ENCODE measurements at regions of chr1 and their contacts with region 1.

Region 1: DNA sequence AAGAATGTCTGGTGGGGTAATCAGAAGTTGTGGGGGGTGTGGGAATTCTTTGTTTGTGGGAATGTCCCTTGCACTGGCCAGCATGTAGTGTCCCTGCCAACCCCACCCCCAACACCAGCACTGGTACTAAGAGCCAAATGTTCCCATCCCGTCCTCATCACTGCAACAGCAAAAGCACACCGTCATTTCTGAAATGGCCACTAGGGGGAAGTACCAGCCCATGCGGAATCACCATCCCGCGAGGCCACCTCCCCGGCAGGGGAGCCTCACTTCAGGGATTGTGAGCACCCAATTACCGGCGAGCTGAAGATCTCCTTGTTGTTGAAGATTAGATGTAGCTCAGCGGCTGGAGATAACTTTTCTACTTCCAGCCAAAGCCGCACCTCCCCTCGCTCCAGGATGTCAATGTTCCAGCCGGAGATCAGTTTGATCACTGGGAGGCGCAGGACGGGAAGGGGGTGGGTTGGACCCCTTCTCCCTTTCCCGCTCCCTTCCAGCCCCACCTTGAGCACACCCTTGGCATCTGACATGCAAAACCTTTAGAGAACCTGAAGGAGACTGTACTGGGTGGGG is 41.0 kb downstream of the MYOM3 start:
- DNase-seq: peak; percentile 79 to 86
- ATAC-seq: peak; percentile 95 to 97
- H3K4me3 ChIP-seq: no peak overlapping the region
- H3K27ac ChIP-seq: peak overlapping the region; percentile 43 to 54; a peak in 3 of 6 replicates
- H3K4me1 ChIP-seq: peaks cover 8% of the 10 kb centered on the region; the same call in 2 of the 3 replicates
- CTCF ChIP-seq: peak; percentile 73
- EP300 ChIP-seq: no peak
- POLR2A ChIP-seq: no peak
- RAD21 ChIP-seq: peak; percentile 83 to 84

Region 2: GRCh38 chr1:24060118-24060881 is 10.6 kb before region 1 on chr1:
- CTCF ChIA-PET with region 1: interaction called, 12 read pairs
- POLR2A ChIA-PET with region 1: no interaction called
- DNase-seq: no peak
- ATAC-seq: no peak
- H3K4me3 ChIP-seq: no peak overlapping the region
- H3K27ac ChIP-seq: no peak overlapping the region
- H3K4me1 ChIP-seq: no peaks in the 10 kb centered on the region
- CTCF ChIP-seq: no peak
- EP300 ChIP-seq: no peak
- POLR2A ChIP-seq: no peak
- RAD21 ChIP-seq: no peak

Region 3: GRCh38 chr1:24081190-24081589 is 10.3 kb after region 1 on chr1:
- CTCF ChIA-PET with region 1: interaction called, 12 read pairs
- POLR2A ChIA-PET with region 1: no interaction called
- DNase-seq: no peak
- ATAC-seq: no peak
- H3K4me3 ChIP-seq: no peak overlapping the region
- H3K27ac ChIP-seq: no peak overlapping the region
- H3K4me1 ChIP-seq: no peaks in the 10 kb centered on the region
- CTCF ChIP-seq: no peak
- EP300 ChIP-seq: no peak
- POLR2A ChIP-seq: no peak
- RAD21 ChIP-seq: no peak

Region 4: DNA sequence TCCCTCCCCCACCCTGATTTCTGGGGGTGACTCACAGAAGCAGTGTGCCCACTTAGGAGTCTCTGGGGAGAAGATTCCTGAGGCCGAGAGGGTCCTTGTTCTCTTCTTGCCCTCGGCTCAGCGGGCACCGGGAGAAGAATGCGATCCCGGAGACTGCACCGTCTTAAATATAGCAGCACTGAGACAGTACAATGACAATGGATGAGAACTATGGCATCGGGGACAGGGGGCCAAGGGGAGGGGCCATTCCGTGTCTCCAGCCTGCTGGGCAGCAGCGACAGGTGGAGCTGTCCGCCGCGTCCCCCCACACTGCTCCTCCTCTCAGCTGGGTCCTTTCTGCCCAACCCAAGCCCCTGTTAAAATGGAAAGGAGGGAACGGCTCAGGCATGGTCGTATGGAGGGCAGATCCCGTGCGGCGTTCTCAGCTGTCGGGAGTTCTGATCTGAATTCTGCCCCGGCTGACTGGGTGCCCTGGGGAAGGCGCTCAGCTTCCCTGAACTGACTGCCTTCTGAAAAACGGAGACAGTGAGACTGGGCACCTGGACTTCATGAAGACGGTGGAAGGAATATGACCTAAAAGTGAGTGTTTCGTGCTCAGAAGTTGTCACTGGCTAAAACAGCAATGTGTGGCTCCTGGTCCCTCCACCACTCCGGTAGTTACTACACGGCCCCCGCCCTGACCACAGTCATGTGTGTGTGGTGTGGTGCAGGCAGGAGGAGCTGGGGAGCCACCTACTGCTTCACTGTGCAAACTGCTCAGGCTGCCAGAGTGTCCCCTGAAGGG is 41.3 kb after region 1 on chr1 and contains the start of gene MYOM3:
- CTCF ChIA-PET with region 1: interaction called, 28 read pairs
- POLR2A ChIA-PET with region 1: no interaction called
- DNase-seq: peak; percentile 25 to 59
- ATAC-seq: peak; percentile 44 to 75; a peak in 3 of 6 replicates
- H3K4me3 ChIP-seq: no peak within 1 kb of the TSS
- H3K27ac ChIP-seq: peak within 1 kb of the TSS in 1 of 2 experiments; percentile 56; a peak in 3 of 6 replicates
- H3K4me1 ChIP-seq: peaks cover 32% of the 10 kb centered on the region
- CTCF ChIP-seq: peak; percentile 33; the same call in 1 of the 3 replicates
- EP300 ChIP-seq: no peak
- POLR2A ChIP-seq: no peak
- RAD21 ChIP-seq: peak; percentile 44 to 65; a peak in 4 of 5 replicates
- polyA plus RNA-seq, gene MYOM3: 2.6 and 2.7 TPM in 2 replicates

Region 5: DNA sequence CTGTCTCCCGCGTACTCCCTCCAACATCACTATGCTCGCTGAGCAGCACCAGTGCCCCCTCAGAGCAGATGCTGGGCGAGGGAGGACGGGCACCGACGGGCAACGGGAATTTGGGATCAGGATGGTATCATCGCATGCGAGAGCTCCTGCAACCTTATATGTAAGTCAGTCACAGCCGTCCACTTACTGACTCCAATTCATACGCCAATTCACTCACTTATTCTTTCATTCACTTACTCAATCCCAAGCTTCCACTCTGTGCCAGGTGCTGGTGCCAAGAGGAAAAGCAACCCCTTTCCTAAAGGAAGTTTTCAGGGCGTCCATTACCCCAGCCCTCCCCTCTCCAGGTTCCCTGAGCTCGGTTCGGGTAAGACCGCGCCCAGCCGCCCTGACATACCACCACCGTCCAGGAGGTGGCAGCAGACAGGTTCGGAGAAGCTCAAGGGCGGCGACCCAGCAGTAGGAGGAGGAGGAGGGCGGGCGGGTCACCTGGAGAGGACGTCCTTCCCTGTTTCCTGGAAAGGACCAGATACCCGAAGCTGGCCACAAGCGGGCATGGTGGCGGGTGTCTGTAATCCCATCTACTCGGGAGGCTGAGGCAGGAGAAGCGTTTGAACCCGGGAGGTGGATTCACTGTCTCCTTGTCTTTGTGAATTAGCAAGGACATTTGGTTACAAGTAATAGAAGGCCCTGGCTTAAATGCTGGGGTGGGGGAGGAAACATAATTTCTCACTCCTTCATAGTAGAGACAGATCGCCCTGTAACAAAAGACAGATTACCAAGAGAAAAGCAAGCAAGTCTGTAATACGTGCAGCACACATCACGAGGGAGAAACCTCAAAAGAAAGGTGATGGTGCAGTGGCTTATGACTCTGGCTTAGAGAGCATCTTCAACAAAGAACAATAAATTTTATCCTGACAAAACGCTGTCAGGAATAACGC is 79.6 kb after region 1 on chr1:
- CTCF ChIA-PET with region 1: interaction called, 13 read pairs
- POLR2A ChIA-PET with region 1: interaction called, 3 read pairs
- DNase-seq: peak; percentile 76 to 89
- ATAC-seq: peak; percentile 95 to 98
- H3K4me3 ChIP-seq: peak overlapping the region; percentile 34
- H3K27ac ChIP-seq: peak overlapping the region; percentile 65 to 83
- H3K4me1 ChIP-seq: peaks cover 12% of the 10 kb centered on the region
- CTCF ChIP-seq: peak; percentile 64
- EP300 ChIP-seq: no peak
- POLR2A ChIP-seq: no peak
- RAD21 ChIP-seq: peak; percentile 58 to 65

Region 6: GRCh38 chr1:24186993-24187805 is 116.3 kb after region 1 on chr1 and contains the start of gene IFNLR1:
- CTCF ChIA-PET with region 1: interaction called, 15 read pairs
- POLR2A ChIA-PET with region 1: no interaction called
- DNase-seq: peak; percentile 26 to 44
- ATAC-seq: peak; percentile 67 to 82
- H3K4me3 ChIP-seq: peak within 1 kb of the TSS; percentile 59
- H3K27ac ChIP-seq: peak within 1 kb of the TSS; percentile 67 to 92
- H3K4me1 ChIP-seq: peaks cover 25% of the 10 kb centered on the region
- CTCF ChIP-seq: no peak
- EP300 ChIP-seq: no peak
- POLR2A ChIP-seq: no peak
- RAD21 ChIP-seq: no peak
- polyA plus RNA-seq, gene IFNLR1: 1.3 and 1.7 TPM in 2 replicates

Measured in A549 (cell line).